Esophagus muscularis mucosa (tissue), 4 donors: ENCODE measurements at regions of chr10 and their contacts with region 1.

Region 1: GRCh38 chr10:95841661-95842498 is 65.9 kb upstream of the CC2D2B start:
- DNase-seq: no peak
- H3K4me3 ChIP-seq: no peak overlapping the region
- H3K27ac ChIP-seq: peak overlapping the region; percentile 70 to 72 (median 70)
- H3K4me1 ChIP-seq: peaks cover 5 to 35% (median 32%) of the 10 kb centered on the region in 4 donors
- H3K27me3 ChIP-seq: no peaks in the 10 kb centered on the region
- CTCF ChIP-seq: peak; percentile 69 to 81 (median 73)
- EP300 ChIP-seq: no peak
- POLR2A ChIP-seq: no peak

Region 2: GRCh38 chr10:95693668-95694534 is 148.0 kb before region 1 on chr10 and contains the start of gene TCTN3:
- intact Hi-C with region 1: loop called (anchors 5 kb)
- DNase-seq: peak; percentile 99
- H3K4me3 ChIP-seq: peak within 1 kb of the TSS; percentile 75 to 86 (median 76)
- H3K27ac ChIP-seq: peak within 1 kb of the TSS; percentile 79 to 92 (median 88)
- H3K4me1 ChIP-seq: peaks cover 16 to 37% (median 24%) of the 10 kb centered on the region in 4 donors
- H3K27me3 ChIP-seq: no peaks in the 10 kb centered on the region
- CTCF ChIP-seq: peak; percentile 98 to 100 (median 99)
- EP300 ChIP-seq: no peak
- POLR2A ChIP-seq: no peak
- total RNA-seq, gene TCTN3: 15.4 to 23.5 (median 21.8) TPM

Region 3: DNA sequence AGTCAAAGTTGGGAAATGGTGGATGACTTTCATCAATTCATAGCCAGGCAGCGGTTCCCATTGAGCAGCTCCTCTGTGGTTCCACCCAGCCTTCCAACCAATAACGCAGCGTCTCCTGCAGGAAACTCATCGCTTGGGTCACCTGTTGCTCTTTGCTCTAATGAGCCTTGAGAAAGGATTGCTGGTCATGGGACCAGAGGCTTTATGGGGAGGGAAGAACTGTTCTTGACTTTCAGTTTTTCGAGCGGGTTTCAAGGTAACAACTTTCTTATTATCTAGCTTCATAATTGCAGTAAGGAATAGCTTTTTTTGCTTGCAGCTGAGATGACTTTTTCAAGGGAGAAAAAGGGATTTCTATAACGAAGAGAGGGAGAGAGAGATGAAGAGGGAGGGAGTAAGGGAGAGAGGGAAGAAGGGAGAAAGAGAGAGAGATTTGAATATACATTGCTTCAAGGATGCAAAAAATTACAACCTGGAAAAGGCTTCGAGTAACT is 86.3 kb before region 1 on chr10:
- intact Hi-C with region 1: loop called (anchors 5 kb)
- DNase-seq: no peak
- H3K4me3 ChIP-seq: peak overlapping the region; percentile 50 to 64 (median 58)
- H3K27ac ChIP-seq: peak overlapping the region; percentile 75 to 88 (median 85)
- H3K4me1 ChIP-seq: peaks cover 16 to 49% (median 45%) of the 10 kb centered on the region in 4 donors
- H3K27me3 ChIP-seq: no peaks in the 10 kb centered on the region
- CTCF ChIP-seq: no peak
- EP300 ChIP-seq: no peak
- POLR2A ChIP-seq: peak; percentile 15